ENCODE measurements at regions of chr6 and their contacts with region 1.

Region 1: GRCh38 chr6:109526905-109527628 is 44.0 kb upstream of the ZBTB24 start:
- H3K4me3 ChIP-seq: no peak overlapping the region
- H3K27ac ChIP-seq: no peak overlapping the region
- H3K4me1 ChIP-seq: no peaks in the 10 kb centered on the region
- CTCF ChIP-seq: peak; percentile 53; the same call in 1 of the 2 replicates

Region 2: GRCh38 chr6:109472132-109472995 is 54.7 kb before region 1 on chr6:
- CTCF ChIA-PET with region 1: no interaction called
- POLR2A ChIA-PET with region 1: no interaction called
- H3K4me3 ChIP-seq: no peak overlapping the region
- H3K27ac ChIP-seq: no peak overlapping the region
- H3K4me1 ChIP-seq: no peaks in the 10 kb centered on the region
- CTCF ChIP-seq: no peak

Region 3: GRCh38 chr6:109516929-109517328 is 10.1 kb before region 1 on chr6:
- CTCF ChIA-PET with region 1: interaction called, 11 read pairs
- POLR2A ChIA-PET with region 1: no interaction called
- H3K4me3 ChIP-seq: no peak overlapping the region
- H3K27ac ChIP-seq: no peak overlapping the region
- H3K4me1 ChIP-seq: no peaks in the 10 kb centered on the region
- CTCF ChIP-seq: no peak

Measured in HEK293 (cell line).